ENCODE measurements at regions of chr19 and their contacts with region 1.

Region 1: DNA sequence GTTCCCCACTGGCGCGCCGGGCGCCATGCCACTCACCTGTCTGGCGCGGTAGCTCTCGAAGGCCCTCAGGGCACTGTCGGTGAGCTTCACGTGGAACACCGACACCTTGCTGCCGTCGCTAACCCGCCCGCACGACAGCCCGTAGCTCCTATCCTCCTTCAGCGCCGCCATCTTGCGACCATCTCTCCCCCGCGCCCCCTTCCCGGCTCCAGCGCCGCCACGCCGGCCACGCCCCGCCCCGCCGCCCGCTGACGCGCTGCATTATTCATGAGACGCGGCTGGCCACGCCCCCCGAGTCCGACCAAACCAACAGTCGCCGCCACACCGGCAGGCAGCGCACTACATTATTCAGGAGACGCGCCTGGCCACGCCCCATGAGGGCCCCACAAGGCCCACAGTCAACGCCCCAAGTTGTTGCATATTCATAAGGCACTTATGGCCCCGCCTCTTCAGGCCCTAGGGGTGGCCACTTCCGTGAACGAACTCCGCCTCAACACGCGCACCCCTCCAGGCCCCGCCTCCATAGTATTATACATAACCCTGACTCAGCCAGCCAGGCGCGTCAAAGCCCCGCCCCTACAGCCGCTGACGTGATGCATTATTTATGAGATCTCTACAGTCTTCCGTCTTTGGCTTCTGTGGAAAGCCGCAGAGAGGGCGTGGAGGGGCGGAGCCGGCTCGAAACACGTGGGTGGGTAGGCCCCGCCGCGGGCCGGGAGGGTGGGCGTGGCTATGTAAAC is at the start of gene ELL:
- DNase-seq: peak; percentile 99 to 100 (median 100)

Region 2: GRCh38 chr19:18469069-18469846 is 52.8 kb before region 1 on chr19:
- intact Hi-C with region 1: loop called (anchors 10 kb)
- DNase-seq: peak in 39 of 42 donors; percentile 30 to 83 (median 63)

Measured in head of caudate nucleus (tissue), 42 donors.